IMR-90 (cell line): ENCODE measurements at regions of chr22 and their contacts with region 1.

Region 1: GRCh38 chr22:36123673-36124630 is 36.6 kb downstream of the APOL3 start:
- DNase-seq: peak; percentile 93
- ATAC-seq: peak; percentile 99
- H3K4me3 ChIP-seq: no peak overlapping the region
- H3K27ac ChIP-seq: peak overlapping the region; percentile 58
- H3K4me1 ChIP-seq: no peaks in the 10 kb centered on the region
- H3K27me3 ChIP-seq: peaks cover 2% of the 10 kb centered on the region; the same call in 1 of the 2 replicates
- CTCF ChIP-seq: peak; percentile 99
- POLR2A ChIP-seq: peak; percentile 67; the same call in 1 of the 2 replicates
- RAD21 ChIP-seq: peak; percentile 100

Region 2: DNA sequence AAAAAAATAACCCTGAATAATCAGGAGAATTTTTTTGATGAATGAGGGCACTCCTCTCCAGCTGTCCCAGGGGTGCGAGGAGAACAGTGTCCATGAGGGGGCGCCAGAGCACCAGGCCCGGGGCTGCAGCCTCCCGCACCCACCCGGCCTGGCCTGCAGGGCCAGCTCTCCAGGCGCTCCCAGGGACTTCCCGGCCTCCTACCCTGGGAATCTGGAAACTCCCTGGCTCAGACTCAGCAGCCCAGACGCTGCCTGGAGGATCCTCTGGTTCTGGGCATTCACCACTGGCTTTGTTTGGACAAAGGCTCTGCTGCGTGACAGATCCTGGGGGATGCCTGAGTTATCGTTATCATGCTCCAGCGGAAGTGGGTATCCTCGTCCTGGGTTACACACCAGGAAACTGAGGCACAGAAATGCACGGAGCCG is 693.0 kb before region 1 on chr22:
- CTCF ChIA-PET with region 1: no interaction called
- POLR2A ChIA-PET with region 1: no interaction called
- dilution Hi-C with region 1: no loop called
- in situ Hi-C with region 1: loop called (anchors 10 kb)
- intact Hi-C with region 1: loop called (anchors 2 kb)
- DNase-seq: peak; percentile 96
- ATAC-seq: peak; percentile 97
- H3K4me3 ChIP-seq: no peak overlapping the region
- H3K27ac ChIP-seq: peak overlapping the region; percentile 2; the same call in 1 of the 2 replicates
- H3K4me1 ChIP-seq: peaks cover 13% of the 10 kb centered on the region
- H3K27me3 ChIP-seq: no peaks in the 10 kb centered on the region
- CTCF ChIP-seq: peak; percentile 99
- POLR2A ChIP-seq: peak; percentile 74
- RAD21 ChIP-seq: peak; percentile 100

Region 3: DNA sequence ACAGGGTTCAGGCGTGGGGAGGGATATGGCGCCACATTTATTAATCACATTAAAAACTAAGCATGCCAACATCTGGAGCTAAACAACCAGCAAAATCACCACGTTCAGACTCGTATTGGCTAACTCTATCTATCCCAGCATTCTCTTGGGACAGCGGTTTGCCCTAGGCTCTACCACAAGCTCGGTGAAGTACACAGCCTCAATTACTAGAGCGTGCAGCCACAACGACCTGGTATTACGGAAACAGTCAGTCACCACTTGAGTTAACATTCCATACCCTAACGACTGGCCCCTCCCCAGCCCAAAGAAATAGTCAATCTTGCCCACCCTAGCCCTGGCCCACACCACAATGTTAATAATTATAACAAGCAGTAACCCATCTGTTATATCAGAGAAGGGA is 374.1 kb before region 1 on chr22:
- CTCF ChIA-PET with region 1: no interaction called
- POLR2A ChIA-PET with region 1: no interaction called
- dilution Hi-C with region 1: no loop called
- in situ Hi-C with region 1: loop called (anchors 5 kb)
- intact Hi-C with region 1: no loop called
- DNase-seq: no peak
- ATAC-seq: no peak
- H3K4me3 ChIP-seq: no peak overlapping the region
- H3K27ac ChIP-seq: no peak overlapping the region
- H3K4me1 ChIP-seq: peaks cover 18% of the 10 kb centered on the region
- H3K27me3 ChIP-seq: no peaks in the 10 kb centered on the region
- CTCF ChIP-seq: no peak
- POLR2A ChIP-seq: no peak
- RAD21 ChIP-seq: no peak

Region 4: DNA sequence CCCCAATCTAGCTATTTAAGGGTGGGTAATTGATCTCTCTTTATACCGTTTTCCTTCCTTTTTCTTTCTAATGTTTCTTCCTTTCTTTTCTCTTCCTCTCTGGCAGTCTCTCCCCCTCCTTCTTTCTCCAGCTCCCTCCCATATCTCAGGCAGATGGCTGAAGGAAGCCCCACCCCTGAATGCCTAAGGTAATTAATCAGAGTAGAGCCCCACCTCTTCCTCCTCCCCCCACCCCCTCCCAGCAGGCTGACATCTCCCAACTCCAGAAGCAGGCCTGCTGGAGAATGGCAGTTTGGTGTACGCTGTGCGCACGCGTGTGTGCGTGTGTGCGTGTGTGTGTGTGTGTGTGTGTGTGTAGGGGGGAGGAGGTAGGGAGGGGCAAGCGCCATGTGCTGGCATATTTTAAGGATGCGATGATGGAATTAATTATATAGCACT is 283.6 kb before region 1 on chr22:
- CTCF ChIA-PET with region 1: no interaction called
- POLR2A ChIA-PET with region 1: no interaction called
- dilution Hi-C with region 1: no loop called
- in situ Hi-C with region 1: no loop called
- intact Hi-C with region 1: loop called (anchors 1 kb)
- DNase-seq: peak; percentile 98
- ATAC-seq: peak; percentile 87
- H3K4me3 ChIP-seq: peak overlapping the region; percentile 77
- H3K27ac ChIP-seq: peak overlapping the region; percentile 86
- H3K4me1 ChIP-seq: peaks cover 6% of the 10 kb centered on the region
- H3K27me3 ChIP-seq: no peaks in the 10 kb centered on the region
- CTCF ChIP-seq: no peak
- POLR2A ChIP-seq: peak; percentile 48; the same call in 1 of the 2 replicates
- RAD21 ChIP-seq: no peak

Region 5: GRCh38 chr22:36028646-36029405 is 95.1 kb before region 1 on chr22 and contains the start of gene RBFOX2:
- CTCF ChIA-PET with region 1: no interaction called
- POLR2A ChIA-PET with region 1: no interaction called
- dilution Hi-C with region 1: no loop called
- in situ Hi-C with region 1: no loop called
- intact Hi-C with region 1: loop called (anchors 1 kb)
- DNase-seq: peak; percentile 95
- ATAC-seq: peak; percentile 93
- H3K4me3 ChIP-seq: peak within 1 kb of the TSS; percentile 98
- H3K27ac ChIP-seq: peak within 1 kb of the TSS; percentile 95
- H3K4me1 ChIP-seq: peaks cover 4% of the 10 kb centered on the region
- H3K27me3 ChIP-seq: no peaks in the 10 kb centered on the region
- CTCF ChIP-seq: no peak
- POLR2A ChIP-seq: peak; percentile 52; the same call in 1 of the 2 replicates
- RAD21 ChIP-seq: no peak
- total RNA-seq, gene RBFOX2: 178 and 227 TPM in 2 replicates